ENCODE measurements at regions of chr15 and their contacts with region 1.

Region 1: DNA sequence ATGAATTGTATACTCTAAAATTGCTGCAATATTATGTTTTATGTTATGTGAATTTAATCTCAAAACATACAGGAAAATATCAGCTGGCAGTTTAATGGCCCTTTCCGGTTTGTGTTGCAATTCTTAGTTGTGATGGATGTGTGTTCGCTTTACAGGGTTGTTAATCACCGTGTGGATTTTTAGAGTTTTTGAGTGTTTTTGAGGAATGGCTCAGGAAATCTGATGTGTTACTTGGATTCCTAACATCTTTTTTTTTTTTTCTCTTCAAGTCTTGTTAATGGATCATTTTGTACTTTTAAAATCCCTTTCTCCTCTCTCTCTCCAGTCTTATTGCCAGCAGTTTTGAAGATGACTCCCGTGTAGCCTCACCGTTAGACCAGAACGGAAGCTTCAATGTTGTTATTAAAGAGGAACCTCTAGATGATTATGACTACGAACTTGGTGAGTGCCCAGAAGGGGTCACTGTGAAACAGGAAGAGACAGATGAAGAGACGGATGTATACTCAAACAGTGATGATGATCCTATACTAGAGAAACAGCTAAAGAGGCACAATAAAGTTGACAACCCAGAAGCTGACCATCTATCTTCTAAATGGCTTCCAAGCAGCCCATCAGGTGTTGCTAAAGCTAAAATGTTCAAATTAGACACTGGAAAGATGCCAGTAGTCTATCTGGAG is 35.7 kb downstream of the MGA start:
- DNase-seq: no peak
- ATAC-seq: peak; percentile 98
- H3K4me3 Mint-ChIP-seq: peak overlapping the region; percentile 35
- H3K27ac Mint-ChIP-seq: peak overlapping the region; percentile 76
- H3K4me1 Mint-ChIP-seq: peaks cover 45% of the 10 kb centered on the region
- H3K27me3 Mint-ChIP-seq: no peaks in the 10 kb centered on the region
- CTCF ChIP-seq: no peak

Region 2: DNA sequence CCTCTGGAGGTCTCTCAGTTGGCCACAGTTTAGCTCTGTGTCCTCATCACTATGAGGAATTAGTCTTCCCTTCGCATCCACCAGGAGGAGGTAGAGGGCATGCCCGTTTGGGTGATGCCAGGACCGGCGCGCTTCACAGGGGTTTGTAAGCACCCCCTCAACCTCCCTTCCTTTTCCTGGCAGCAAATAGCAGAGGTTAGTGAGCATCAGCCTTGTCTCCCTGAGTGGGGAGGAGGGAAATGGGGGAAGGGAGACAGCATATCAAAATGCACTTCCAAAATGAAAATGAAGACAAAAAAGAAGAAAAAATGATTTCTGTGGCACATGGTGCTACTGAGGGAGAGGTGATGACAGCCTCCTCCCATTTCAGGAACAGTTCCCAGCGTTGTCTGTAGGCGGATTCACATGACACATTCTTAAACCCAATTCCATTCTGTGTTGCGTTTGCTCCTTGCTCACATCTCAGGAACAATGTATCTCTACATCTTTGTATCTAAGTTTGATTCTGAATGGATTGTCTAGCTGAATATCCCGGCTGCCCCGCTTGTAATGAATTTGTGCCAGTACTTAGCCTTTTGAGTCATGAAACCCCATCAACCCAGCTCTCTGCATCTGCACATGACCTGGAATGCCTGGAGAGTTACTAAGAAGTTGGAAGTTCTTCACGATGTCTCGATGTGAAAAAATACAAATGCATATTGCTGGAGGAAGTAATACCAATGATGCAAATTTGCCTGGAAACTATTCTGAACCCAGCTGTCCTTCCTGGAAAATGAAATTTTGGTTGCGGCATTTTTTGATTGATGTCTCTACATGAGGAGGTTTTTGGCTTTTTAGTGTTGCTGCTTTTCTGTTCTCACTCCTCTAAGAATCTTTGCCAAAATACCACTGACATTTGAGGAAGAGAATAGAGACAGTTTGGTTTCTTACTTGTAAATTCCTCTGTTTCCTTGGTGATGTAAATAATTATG is 91.7 kb before region 1 on chr15:
- CTCF ChIA-PET with region 1: interaction called, 12 read pairs
- POLR2A ChIA-PET with region 1: no interaction called
- intact Hi-C with region 1: loop called (anchors 5 kb)
- DNase-seq: peak; percentile 25
- ATAC-seq: peak; percentile 96
- H3K4me3 Mint-ChIP-seq: peak overlapping the region; percentile 64
- H3K27ac Mint-ChIP-seq: no peak overlapping the region
- H3K4me1 Mint-ChIP-seq: peaks cover 10% of the 10 kb centered on the region
- H3K27me3 Mint-ChIP-seq: peaks cover 26% of the 10 kb centered on the region
- CTCF ChIP-seq: peak; percentile 13

Region 3: DNA sequence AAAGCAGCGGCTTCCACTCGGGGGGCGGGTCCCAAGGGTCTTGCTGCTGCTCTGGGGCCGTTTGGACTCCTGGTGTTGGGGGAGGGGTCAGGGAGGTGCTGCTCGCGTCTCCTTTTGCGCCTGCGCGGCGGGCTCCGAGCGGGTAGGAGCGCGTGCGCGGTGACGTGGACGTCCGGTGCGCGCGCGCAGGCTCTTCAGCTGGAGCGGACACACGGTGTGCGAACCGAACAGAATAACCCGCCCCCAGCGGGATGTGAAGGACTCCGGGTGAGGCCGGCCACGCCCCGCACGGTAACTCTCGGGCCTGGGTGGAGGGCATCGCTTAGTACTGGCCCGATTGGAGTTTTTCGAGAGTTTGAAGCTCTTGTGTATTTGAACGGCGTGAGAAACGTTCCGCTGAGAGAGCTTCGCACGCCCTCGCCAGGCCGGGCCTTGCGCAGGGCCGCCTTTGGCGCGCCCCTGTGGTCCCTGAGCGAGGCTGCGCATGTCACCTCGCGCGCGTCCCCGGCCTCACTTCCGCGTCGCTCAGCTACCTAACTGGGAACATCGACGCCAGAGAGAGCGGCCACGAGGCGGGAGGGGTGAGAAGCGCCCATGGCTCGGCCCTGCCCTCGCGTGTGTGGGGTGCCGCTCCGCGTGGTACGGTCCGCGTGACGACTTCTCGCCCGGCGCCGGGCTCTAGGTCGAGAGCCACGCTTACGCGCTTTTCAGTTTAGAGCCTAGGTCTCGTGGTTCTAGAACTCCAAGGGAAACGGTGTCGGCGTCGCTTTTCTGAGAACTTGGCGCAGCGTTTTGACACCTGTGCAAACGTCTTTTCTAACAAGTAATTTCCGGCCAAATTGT is 35.4 kb before region 1 on chr15 and contains the start of gene MGA:
- CTCF ChIA-PET with region 1: interaction called, 5 read pairs
- POLR2A ChIA-PET with region 1: interaction called, 3 read pairs
- intact Hi-C with region 1: loop called (anchors 1 kb)
- DNase-seq: peak; percentile 92
- ATAC-seq: peak; percentile 84
- H3K4me3 Mint-ChIP-seq: peak within 1 kb of the TSS; percentile 91
- H3K27ac Mint-ChIP-seq: peak within 1 kb of the TSS; percentile 91
- H3K4me1 Mint-ChIP-seq: peaks cover 51% of the 10 kb centered on the region
- H3K27me3 Mint-ChIP-seq: peaks cover 2% of the 10 kb centered on the region
- CTCF ChIP-seq: no peak
- total RNA-seq, gene MGA: 49.9 and 58.3 TPM in 2 replicates

Region 4: GRCh38 chr15:41730543-41730942 is 34.7 kb after region 1 on chr15:
- CTCF ChIA-PET with region 1: interaction called, 3 read pairs
- POLR2A ChIA-PET with region 1: no interaction called
- intact Hi-C with region 1: loop called (anchors 5 kb)
- DNase-seq: no peak
- ATAC-seq: peak; percentile 62
- H3K4me3 Mint-ChIP-seq: peak overlapping the region; percentile 44
- H3K27ac Mint-ChIP-seq: peak overlapping the region; percentile 63
- H3K4me1 Mint-ChIP-seq: peaks cover 13% of the 10 kb centered on the region
- H3K27me3 Mint-ChIP-seq: no peaks in the 10 kb centered on the region
- CTCF ChIP-seq: no peak

Region 5: GRCh38 chr15:41749526-41749925 is 53.6 kb after region 1 on chr15:
- CTCF ChIA-PET with region 1: no interaction called
- POLR2A ChIA-PET with region 1: no interaction called
- intact Hi-C with region 1: no loop called
- DNase-seq: no peak
- ATAC-seq: no peak
- H3K4me3 Mint-ChIP-seq: no peak overlapping the region
- H3K27ac Mint-ChIP-seq: no peak overlapping the region
- H3K4me1 Mint-ChIP-seq: no peaks in the 10 kb centered on the region
- H3K27me3 Mint-ChIP-seq: no peaks in the 10 kb centered on the region
- CTCF ChIP-seq: no peak

Region 6: GRCh38 chr15:41811432-41812195 is 115.7 kb after region 1 on chr15:
- CTCF ChIA-PET with region 1: interaction called, 30 read pairs
- POLR2A ChIA-PET with region 1: no interaction called
- intact Hi-C with region 1: loop called (anchors 1 kb)
- DNase-seq: peak; percentile 67
- ATAC-seq: peak; percentile 97
- H3K4me3 Mint-ChIP-seq: no peak overlapping the region
- H3K27ac Mint-ChIP-seq: no peak overlapping the region
- H3K4me1 Mint-ChIP-seq: peaks cover 11% of the 10 kb centered on the region
- H3K27me3 Mint-ChIP-seq: no peaks in the 10 kb centered on the region
- CTCF ChIP-seq: peak; percentile 85

Region 7: GRCh38 chr15:42034628-42035434 is 338.9 kb after region 1 on chr15:
- CTCF ChIA-PET with region 1: no interaction called
- POLR2A ChIA-PET with region 1: no interaction called
- intact Hi-C with region 1: no loop called
- DNase-seq: no peak
- ATAC-seq: no peak
- H3K4me3 Mint-ChIP-seq: peak overlapping the region; percentile 30
- H3K27ac Mint-ChIP-seq: peak overlapping the region; percentile 68
- H3K4me1 Mint-ChIP-seq: peaks cover 35% of the 10 kb centered on the region
- H3K27me3 Mint-ChIP-seq: no peaks in the 10 kb centered on the region
- CTCF ChIP-seq: no peak